AG04450 (cell line): ENCODE measurements at regions of chr12 and their contacts with region 1.

Region 1: DNA sequence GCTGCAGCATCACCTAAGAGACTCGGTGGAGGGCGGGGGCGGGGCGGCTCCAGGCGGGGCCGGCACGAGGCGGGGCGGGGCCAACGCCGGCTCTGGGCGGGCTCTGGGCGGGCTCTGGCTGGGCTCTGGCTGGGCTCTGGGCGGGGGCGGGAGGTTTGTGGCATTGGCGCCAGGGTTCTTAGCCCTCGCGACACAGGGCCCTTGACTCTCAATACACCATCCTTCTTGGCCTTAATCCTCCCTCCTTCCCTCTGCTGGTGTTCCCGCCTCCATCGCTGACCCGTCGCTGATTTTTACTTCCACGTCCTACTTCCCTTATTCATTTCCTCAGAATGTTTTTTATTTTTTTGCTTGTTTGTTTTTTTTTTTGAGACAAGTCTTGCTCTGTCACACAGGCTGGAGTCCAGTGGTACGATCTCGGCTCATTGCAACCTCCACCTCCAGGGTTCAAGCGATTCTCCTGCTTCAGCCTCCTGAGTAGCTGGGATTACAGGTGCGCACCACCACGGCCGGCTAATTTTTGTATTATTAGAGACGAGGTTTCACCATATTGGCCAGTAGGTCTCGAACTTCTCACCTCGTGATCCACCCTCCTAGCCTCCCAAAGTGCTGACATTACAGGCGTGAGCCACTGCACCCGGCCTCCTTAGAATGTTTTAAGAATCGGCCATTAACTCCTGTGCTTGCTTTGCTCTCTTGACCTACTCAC is at the start of gene BLTP3B:
- DNase-seq: peak; percentile 13
- H3K4me3 ChIP-seq: peak within 1 kb of the TSS; percentile 95
- H3K27ac ChIP-seq: peak within 1 kb of the TSS; percentile 82
- H3K27me3 ChIP-seq: no peaks in the 10 kb centered on the region
- CTCF ChIP-seq: no peak
- polyA plus RNA-seq, gene BLTP3B: 21.2 and 28.9 TPM in 2 replicates

Region 2: DNA sequence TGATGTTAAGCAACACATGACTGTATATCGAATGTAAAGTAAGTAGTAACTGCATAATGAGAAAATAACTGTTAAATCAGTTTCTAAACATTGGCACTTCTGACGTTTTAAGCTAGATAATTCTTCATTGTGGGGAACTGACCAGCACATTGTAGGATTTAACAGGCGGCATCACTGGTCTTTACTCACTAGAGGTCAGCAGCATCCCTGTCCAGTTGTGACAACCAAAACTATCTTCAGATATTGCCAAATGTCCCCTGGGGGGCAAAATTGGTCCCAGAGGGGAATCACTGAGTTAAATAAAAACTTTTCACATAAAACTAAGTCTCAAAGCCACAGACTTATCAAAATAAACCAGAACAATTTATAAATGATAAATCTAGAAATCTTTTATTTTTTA is 65.6 kb before region 1 on chr12:
- CTCF ChIA-PET with region 1: no interaction called
- POLR2A ChIA-PET with region 1: no interaction called
- DNase-seq: no peak
- H3K4me3 ChIP-seq: no peak overlapping the region
- H3K27ac ChIP-seq: no peak overlapping the region
- H3K27me3 ChIP-seq: no peaks in the 10 kb centered on the region
- CTCF ChIP-seq: peak; percentile 23

Region 3: DNA sequence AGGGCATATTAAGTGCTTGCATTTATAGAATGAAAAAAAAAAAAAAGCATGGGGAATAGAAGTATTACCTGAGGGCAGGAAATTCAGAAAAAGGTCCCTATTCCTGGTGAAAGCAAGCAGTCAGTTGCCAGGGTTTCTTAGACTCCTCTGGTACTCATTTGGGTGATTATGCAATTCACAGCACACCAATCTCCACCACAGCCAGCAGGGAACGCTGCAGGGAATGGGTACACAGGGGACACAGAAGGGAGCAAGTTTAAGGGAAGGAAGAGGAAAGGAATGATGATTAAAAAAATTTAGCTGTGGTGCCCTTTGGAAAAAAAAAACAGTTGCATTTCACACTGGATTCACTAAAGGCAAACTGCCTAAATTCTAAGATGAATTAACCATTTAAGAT is 14.5 kb before region 1 on chr12:
- CTCF ChIA-PET with region 1: interaction called, 20 read pairs
- POLR2A ChIA-PET with region 1: no interaction called
- DNase-seq: no peak
- H3K4me3 ChIP-seq: peak overlapping the region; percentile 17; the same call in 1 of the 2 replicates
- H3K27ac ChIP-seq: peak overlapping the region; percentile 47
- H3K27me3 ChIP-seq: no peaks in the 10 kb centered on the region
- CTCF ChIP-seq: peak; percentile 42

Region 4: GRCh38 chr12:100643246-100643645 is 500.2 kb after region 1 on chr12:
- CTCF ChIA-PET with region 1: no interaction called
- POLR2A ChIA-PET with region 1: no interaction called
- DNase-seq: no peak
- H3K4me3 ChIP-seq: no peak overlapping the region
- H3K27ac ChIP-seq: no peak overlapping the region
- H3K27me3 ChIP-seq: no peaks in the 10 kb centered on the region
- CTCF ChIP-seq: no peak